Activated CD8-positive, alpha-beta T cell treated with anti-CD3 and anti-CD28 coated beads, Interleukin-2, amount 10 ng/mL, durations not matched to agents 7 days and 5 days (primary cell): ENCODE measurements at regions of chr2 and their contacts with region 1.

Region 1: GRCh38 chr2:25309402-25309801 is 32.3 kb downstream of the DNMT3A start:
- DNase-seq: peak; percentile 79
- ATAC-seq: peak; percentile 45
- H3K4me3 Mint-ChIP-seq: no peak overlapping the region
- H3K27ac Mint-ChIP-seq: peak overlapping the region; percentile 37
- H3K4me1 Mint-ChIP-seq: peaks cover 77% of the 10 kb centered on the region
- H3K27me3 Mint-ChIP-seq: no peaks in the 10 kb centered on the region

Region 2: GRCh38 chr2:24754985-24755705 is 554.3 kb before region 1 on chr2:
- CTCF ChIA-PET with region 1: no interaction called
- POLR2A ChIA-PET with region 1: no interaction called
- DNase-seq: no peak
- ATAC-seq: no peak
- H3K4me3 Mint-ChIP-seq: no peak overlapping the region
- H3K27ac Mint-ChIP-seq: no peak overlapping the region
- H3K4me1 Mint-ChIP-seq: no peaks in the 10 kb centered on the region
- H3K27me3 Mint-ChIP-seq: no peaks in the 10 kb centered on the region

Region 3: DNA sequence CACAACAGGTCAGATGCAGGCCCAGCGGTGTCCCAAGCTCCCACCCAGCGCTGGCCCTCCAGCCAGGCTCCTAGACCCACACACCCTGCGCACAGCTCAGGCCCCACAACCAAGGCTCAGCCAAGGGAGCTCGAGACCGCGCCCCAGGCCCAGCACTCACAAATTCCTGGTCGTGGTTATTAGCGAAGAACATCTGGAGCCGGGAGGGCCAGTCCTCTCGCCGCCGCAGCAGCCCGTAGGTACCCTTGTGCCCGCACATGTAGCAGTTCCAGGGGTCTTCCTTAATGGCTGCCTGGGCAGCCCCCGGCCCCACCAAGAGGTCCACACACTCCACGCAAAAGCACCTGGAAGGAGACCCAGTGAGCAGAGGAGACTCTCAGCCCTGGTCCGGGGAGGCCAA is 65.4 kb before region 1 on chr2:
- CTCF ChIA-PET with region 1: no interaction called
- POLR2A ChIA-PET with region 1: no interaction called
- DNase-seq: no peak
- ATAC-seq: no peak
- H3K4me3 Mint-ChIP-seq: no peak overlapping the region
- H3K27ac Mint-ChIP-seq: no peak overlapping the region
- H3K4me1 Mint-ChIP-seq: peaks cover 4% of the 10 kb centered on the region
- H3K27me3 Mint-ChIP-seq: no peaks in the 10 kb centered on the region

Region 4: DNA sequence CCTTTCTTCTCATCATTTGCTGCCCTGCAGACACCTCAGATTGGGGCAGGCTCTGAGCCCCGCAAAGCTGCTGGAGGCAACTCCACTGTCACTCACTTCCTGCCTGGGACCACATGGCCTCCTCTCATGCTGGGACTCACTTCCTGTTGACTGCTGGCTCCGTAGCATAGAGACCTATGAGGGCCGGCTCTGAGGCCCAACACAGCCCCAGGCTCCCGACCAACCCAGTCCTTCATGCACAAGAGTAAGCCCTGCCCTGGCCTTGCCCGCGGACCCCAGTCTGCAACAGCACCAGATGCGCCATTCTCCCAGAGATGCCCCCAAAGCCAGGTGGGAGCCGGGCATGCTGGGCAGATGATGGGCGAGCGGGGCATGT is 23.4 kb before region 1 on chr2:
- CTCF ChIA-PET with region 1: interaction called, 14 read pairs
- POLR2A ChIA-PET with region 1: interaction called, 3 read pairs
- DNase-seq: peak; percentile 91
- ATAC-seq: peak; percentile 100
- H3K4me3 Mint-ChIP-seq: peak overlapping the region; percentile 64
- H3K27ac Mint-ChIP-seq: peak overlapping the region; percentile 95
- H3K4me1 Mint-ChIP-seq: peaks cover 47% of the 10 kb centered on the region
- H3K27me3 Mint-ChIP-seq: no peaks in the 10 kb centered on the region

Region 5: DNA sequence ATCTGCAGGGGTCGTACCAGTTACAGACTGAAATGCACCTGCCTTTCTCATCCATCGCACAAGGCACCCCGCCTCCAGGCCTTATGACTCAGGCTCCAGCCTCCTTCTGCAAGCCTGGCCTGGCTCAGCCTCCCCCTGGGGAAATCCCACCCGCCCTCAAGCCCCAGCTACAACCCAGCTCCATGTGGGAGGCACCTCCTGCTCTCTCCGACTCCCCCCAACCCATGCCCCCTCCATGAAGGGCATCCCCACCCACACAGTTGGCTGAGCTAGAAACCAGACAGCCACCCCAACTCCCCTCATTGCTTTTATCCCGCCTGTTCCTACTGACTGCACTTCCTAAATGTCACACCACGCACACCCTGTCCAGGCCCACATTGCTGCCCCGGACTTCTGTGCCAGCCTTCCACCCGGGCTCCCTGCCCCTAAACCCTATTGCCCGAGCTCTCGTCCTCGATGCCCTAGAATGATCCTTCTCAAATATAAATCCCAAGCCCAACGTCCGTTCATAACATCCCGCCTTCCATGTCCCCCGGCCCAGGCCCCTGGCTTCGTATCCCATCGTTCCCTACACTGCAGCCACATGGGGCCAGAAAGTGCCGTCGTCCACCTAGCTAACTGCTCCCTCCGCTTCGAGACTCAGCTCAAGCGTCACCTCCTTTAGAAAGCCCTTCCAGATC is 22.4 kb after region 1 on chr2:
- CTCF ChIA-PET with region 1: interaction called, 14 read pairs
- POLR2A ChIA-PET with region 1: interaction called, 17 read pairs
- DNase-seq: no peak
- ATAC-seq: no peak
- H3K4me3 Mint-ChIP-seq: no peak overlapping the region
- H3K27ac Mint-ChIP-seq: no peak overlapping the region
- H3K4me1 Mint-ChIP-seq: peaks cover 51% of the 10 kb centered on the region
- H3K27me3 Mint-ChIP-seq: no peaks in the 10 kb centered on the region

Region 6: DNA sequence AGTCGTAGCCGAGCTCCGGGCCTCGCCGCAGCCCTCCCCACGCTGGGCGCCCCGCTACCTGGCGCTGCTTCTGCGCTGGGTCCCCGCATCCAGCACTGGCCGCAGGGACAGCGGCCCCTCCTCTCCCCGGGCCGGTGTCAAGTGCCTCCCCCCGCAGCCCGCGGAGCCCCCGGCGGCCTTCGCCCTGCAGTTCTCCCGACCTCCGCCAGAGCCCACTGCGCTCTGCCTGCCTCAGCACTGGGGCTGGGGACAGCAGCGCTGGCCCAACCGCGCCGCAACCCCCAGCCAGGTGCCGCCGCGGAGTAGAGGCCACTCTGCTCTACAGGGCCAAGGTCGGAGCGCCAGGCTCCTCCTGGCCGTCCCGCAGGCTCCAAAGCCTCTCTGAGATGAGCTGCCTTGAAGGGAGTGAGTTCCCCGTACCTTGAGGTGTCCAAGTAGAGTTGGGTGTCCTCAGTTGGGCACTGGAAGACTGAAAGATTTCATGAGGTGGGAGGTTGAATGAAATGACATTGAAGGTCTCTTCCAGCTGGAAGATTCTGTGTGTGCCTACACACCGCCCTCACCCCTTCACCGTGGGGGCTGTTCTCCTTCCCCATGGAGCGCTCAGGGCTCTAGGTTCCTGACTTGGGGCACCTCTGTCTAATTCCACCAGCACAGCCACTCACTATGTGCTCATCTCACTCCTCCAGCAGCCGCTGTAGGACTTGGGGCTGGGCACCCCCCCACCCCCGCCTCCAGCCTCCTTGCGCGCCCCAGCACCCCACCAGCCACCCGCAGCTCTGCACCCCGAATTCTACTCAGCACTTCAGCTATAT is 33.2 kb after region 1 on chr2:
- CTCF ChIA-PET with region 1: interaction called, 12 read pairs
- POLR2A ChIA-PET with region 1: interaction called, 11 read pairs
- DNase-seq: peak; percentile 89
- ATAC-seq: peak; percentile 87
- H3K4me3 Mint-ChIP-seq: peak overlapping the region; percentile 79
- H3K27ac Mint-ChIP-seq: peak overlapping the region; percentile 89
- H3K4me1 Mint-ChIP-seq: peaks cover 33% of the 10 kb centered on the region
- H3K27me3 Mint-ChIP-seq: no peaks in the 10 kb centered on the region

Region 7: GRCh38 chr2:25567406-25567805 is 258.0 kb after region 1 on chr2:
- CTCF ChIA-PET with region 1: interaction called, 11 read pairs
- POLR2A ChIA-PET with region 1: no interaction called
- DNase-seq: peak; percentile 52
- ATAC-seq: peak; percentile 74
- H3K4me3 Mint-ChIP-seq: no peak overlapping the region
- H3K27ac Mint-ChIP-seq: peak overlapping the region; percentile 73
- H3K4me1 Mint-ChIP-seq: peaks cover 19% of the 10 kb centered on the region
- H3K27me3 Mint-ChIP-seq: no peaks in the 10 kb centered on the region